ENCODE measurements at regions of chr2 and their contacts with region 1.

Region 1: GRCh38 chr2:230614913-230615332 is 97.7 kb upstream of the CAB39 start:
- DNase-seq: peak in 2 of 9 experiments; percentile 33 to 35
- ATAC-seq: no peak
- H3K4me3 ChIP-seq: no peak overlapping the region
- H3K4me3 Mint-ChIP-seq: no peak overlapping the region
- H3K27ac ChIP-seq: no peak overlapping the region
- H3K27ac Mint-ChIP-seq: no peak overlapping the region
- H3K4me1 ChIP-seq: peaks cover 15% of the 10 kb centered on the region
- H3K4me1 Mint-ChIP-seq: peaks cover 22% of the 10 kb centered on the region
- H3K27me3 ChIP-seq: no peaks in the 10 kb centered on the region
- H3K27me3 Mint-ChIP-seq: no peaks in the 10 kb centered on the region
- CTCF ChIP-seq: no peak

Region 2: DNA sequence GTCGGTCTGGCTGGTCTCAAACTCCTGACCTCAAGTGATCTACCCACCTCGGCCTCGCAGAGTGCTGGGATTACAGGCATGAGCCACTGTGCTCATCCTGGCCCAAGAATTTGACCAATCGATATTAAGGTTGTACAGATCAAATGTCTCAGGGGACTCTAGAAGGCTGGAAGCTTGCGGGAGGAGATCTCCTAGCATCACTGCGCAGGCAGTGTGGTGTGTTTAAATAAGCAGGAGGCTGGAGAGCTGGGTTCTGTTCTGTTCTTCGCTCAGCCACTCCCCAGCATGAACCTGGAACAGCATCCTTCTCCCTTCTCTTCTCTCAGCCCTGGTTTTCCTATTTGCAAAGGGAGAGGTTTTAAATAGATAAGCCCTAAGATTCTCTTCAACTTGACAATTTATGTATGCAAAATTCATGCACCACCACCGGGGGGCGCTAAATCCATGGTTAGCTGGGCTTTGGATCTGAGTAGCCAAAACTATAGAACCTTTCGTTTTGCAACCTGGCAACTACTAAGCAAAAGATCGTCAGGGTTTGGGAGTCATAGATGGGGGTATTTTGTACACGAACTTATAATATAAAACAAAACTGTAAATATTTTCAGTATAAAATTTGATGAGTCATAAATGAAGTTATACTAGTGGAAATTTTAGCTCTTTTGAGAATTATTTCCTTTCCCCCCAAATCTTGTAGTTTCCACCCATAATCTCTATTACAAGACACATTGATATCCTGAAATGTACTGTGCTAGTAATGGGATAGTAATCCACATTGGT is 606.8 kb before region 1 on chr2:
- CTCF ChIA-PET with region 1: interaction called, 8 read pairs
- POLR2A ChIA-PET with region 1: no interaction called
- intact Hi-C with region 1: loop called in 1 of 2 experiments (anchors 1 kb)
- DNase-seq: peak; percentile 56 to 87 (median 73)
- ATAC-seq: peak; percentile 48
- H3K4me3 ChIP-seq: no peak overlapping the region
- H3K4me3 Mint-ChIP-seq: no peak overlapping the region
- H3K27ac ChIP-seq: no peak overlapping the region
- H3K27ac Mint-ChIP-seq: no peak overlapping the region
- H3K4me1 ChIP-seq: no peaks in the 10 kb centered on the region
- H3K4me1 Mint-ChIP-seq: peaks cover 3% of the 10 kb centered on the region
- H3K27me3 ChIP-seq: no peaks in the 10 kb centered on the region
- H3K27me3 Mint-ChIP-seq: no peaks in the 10 kb centered on the region
- CTCF ChIP-seq: peak; percentile 83

Region 3: DNA sequence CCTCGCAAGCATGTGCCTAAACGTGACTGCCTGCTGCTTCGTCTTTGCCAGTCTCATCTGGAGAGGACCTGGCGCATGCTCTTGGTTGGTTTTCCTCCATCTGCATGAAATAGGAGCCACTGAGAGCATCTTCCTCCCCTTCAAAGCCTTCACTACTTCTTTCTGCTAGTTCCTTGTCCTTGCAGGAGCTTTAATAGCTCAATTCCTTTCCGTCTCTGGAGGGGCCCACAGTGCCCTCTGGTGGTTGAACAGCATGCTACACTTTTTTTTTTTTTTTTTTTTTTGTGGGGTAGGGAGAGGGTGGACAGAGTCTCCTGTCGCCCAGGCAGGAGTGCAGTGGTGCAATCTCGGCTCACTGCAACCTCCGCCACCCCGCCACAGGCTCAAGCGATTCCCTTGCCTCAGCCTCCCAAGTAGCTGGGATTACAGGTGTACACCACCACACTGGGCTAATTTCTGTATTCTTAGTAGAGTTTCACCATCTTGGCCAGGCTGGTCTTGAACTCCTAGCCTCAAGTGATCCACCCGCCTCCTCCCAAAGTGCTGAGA is 454.7 kb before region 1 on chr2:
- CTCF ChIA-PET with region 1: interaction called, 3 read pairs
- POLR2A ChIA-PET with region 1: no interaction called
- intact Hi-C with region 1: loop called (anchors 1 to 2 kb)
- DNase-seq: peak in 8 of 9 experiments; percentile 27 to 68 (median 55)
- ATAC-seq: peak; percentile 61
- H3K4me3 ChIP-seq: no peak overlapping the region
- H3K4me3 Mint-ChIP-seq: no peak overlapping the region
- H3K27ac ChIP-seq: no peak overlapping the region
- H3K27ac Mint-ChIP-seq: no peak overlapping the region
- H3K4me1 ChIP-seq: no peaks in the 10 kb centered on the region
- H3K4me1 Mint-ChIP-seq: peaks cover 2% of the 10 kb centered on the region
- H3K27me3 ChIP-seq: no peaks in the 10 kb centered on the region
- H3K27me3 Mint-ChIP-seq: no peaks in the 10 kb centered on the region
- CTCF ChIP-seq: peak; percentile 88

Region 4: GRCh38 chr2:230219419-230220331 is 395.2 kb before region 1 on chr2 and contains the start of gene SP110:
- CTCF ChIA-PET with region 1: interaction called, 4 read pairs
- POLR2A ChIA-PET with region 1: no interaction called
- intact Hi-C with region 1: loop called (anchors 1 to 2 kb)
- DNase-seq: peak; percentile 52 to 89 (median 78)
- ATAC-seq: peak; percentile 93
- H3K4me3 ChIP-seq: peak within 1 kb of the TSS; percentile 90 to 96
- H3K4me3 Mint-ChIP-seq: peak within 1 kb of the TSS; percentile 98
- H3K27ac ChIP-seq: peak within 1 kb of the TSS; percentile 82 to 88
- H3K27ac Mint-ChIP-seq: peak within 1 kb of the TSS; percentile 99
- H3K4me1 ChIP-seq: peaks cover 36% of the 10 kb centered on the region
- H3K4me1 Mint-ChIP-seq: peaks cover 60% of the 10 kb centered on the region
- H3K27me3 ChIP-seq: no peaks in the 10 kb centered on the region
- H3K27me3 Mint-ChIP-seq: no peaks in the 10 kb centered on the region
- CTCF ChIP-seq: no peak
- total RNA-seq, gene SP110: 50.6 to 58.1 TPM

Region 5: DNA sequence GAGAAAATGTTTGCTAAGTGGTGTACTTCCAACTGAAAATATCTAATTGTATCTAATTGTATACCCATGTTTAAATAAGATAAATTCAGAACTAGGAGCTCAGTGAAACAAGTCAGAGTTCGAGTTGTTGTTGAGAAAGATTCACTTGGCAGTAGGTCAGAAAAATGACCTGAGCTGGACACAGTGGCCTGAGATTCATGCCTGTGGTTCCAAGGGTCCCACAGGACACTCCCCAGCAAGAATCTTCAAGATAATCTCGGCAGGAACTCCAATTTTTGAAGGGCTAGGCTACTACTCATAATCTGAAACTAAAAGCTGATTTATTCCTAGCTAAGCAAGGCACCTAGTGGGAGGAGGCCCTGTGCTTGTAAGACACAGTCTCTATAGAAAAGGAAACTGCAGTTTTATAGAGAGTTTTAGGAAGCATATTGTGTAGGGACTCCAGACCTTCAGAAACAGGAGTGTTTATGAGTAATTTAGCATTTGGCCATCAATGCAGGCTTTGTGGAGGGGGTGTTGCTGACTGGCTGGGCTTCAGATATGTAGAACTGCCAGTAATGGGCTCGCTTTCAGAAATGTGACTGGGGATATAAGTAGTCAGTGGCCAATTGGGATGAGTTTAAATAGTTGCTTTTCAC is 346.2 kb before region 1 on chr2:
- CTCF ChIA-PET with region 1: no interaction called
- POLR2A ChIA-PET with region 1: no interaction called
- intact Hi-C with region 1: no loop called
- DNase-seq: no peak
- ATAC-seq: no peak
- H3K4me3 ChIP-seq: no peak overlapping the region
- H3K4me3 Mint-ChIP-seq: no peak overlapping the region
- H3K27ac ChIP-seq: no peak overlapping the region
- H3K27ac Mint-ChIP-seq: no peak overlapping the region
- H3K4me1 ChIP-seq: no peaks in the 10 kb centered on the region
- H3K4me1 Mint-ChIP-seq: peaks cover 14% of the 10 kb centered on the region
- H3K27me3 ChIP-seq: no peaks in the 10 kb centered on the region
- H3K27me3 Mint-ChIP-seq: no peaks in the 10 kb centered on the region
- CTCF ChIP-seq: no peak

Region 6: GRCh38 chr2:230472621-230473018 is 142.3 kb before region 1 on chr2:
- CTCF ChIA-PET with region 1: no interaction called
- POLR2A ChIA-PET with region 1: no interaction called
- intact Hi-C with region 1: loop called (anchors 5 kb)
- DNase-seq: peak in 3 of 9 experiments; percentile 8 to 24 (median 9)
- ATAC-seq: peak; percentile 48
- H3K4me3 ChIP-seq: no peak overlapping the region
- H3K4me3 Mint-ChIP-seq: no peak overlapping the region
- H3K27ac ChIP-seq: peak overlapping the region in 1 of 2 experiments; percentile 55
- H3K27ac Mint-ChIP-seq: peak overlapping the region; percentile 91
- H3K4me1 ChIP-seq: peaks cover 18% of the 10 kb centered on the region
- H3K4me1 Mint-ChIP-seq: peaks cover 41% of the 10 kb centered on the region
- H3K27me3 ChIP-seq: no peaks in the 10 kb centered on the region
- H3K27me3 Mint-ChIP-seq: no peaks in the 10 kb centered on the region
- CTCF ChIP-seq: no peak

Region 7: GRCh38 chr2:230684270-230685168 is 69.6 kb after region 1 on chr2:
- CTCF ChIA-PET with region 1: no interaction called
- POLR2A ChIA-PET with region 1: no interaction called
- intact Hi-C with region 1: no loop called
- DNase-seq: no peak
- ATAC-seq: no peak
- H3K4me3 ChIP-seq: no peak overlapping the region
- H3K4me3 Mint-ChIP-seq: no peak overlapping the region
- H3K27ac ChIP-seq: no peak overlapping the region
- H3K27ac Mint-ChIP-seq: no peak overlapping the region
- H3K4me1 ChIP-seq: no peaks in the 10 kb centered on the region
- H3K4me1 Mint-ChIP-seq: peaks cover 3% of the 10 kb centered on the region
- H3K27me3 ChIP-seq: no peaks in the 10 kb centered on the region
- H3K27me3 Mint-ChIP-seq: no peaks in the 10 kb centered on the region
- CTCF ChIP-seq: no peak

Region 8: DNA sequence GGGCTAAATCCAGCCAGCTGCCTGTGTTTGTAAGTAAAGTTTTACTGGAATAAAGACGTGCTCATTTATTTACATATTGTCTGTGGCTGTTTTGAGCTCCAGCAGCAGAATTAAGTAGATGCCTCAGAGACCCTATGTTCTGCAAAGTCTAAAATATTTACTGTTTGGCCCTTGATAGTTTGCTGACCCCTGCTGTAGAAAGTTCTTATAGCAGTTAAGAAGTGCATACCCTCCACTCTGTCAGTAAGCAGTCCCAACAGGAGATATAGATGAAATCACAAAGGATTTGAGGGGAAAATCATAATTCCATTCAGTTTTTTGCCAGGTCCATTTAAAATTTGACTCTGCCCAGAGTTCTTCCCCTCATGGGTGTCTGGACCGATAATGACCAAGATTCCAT is 199.7 kb after region 1 on chr2:
- CTCF ChIA-PET with region 1: no interaction called
- POLR2A ChIA-PET with region 1: no interaction called
- intact Hi-C with region 1: no loop called
- DNase-seq: peak in 1 of 9 experiments; percentile 33
- ATAC-seq: no peak
- H3K4me3 ChIP-seq: no peak overlapping the region
- H3K4me3 Mint-ChIP-seq: no peak overlapping the region
- H3K27ac ChIP-seq: no peak overlapping the region
- H3K27ac Mint-ChIP-seq: peak overlapping the region; percentile 80
- H3K4me1 ChIP-seq: no peaks in the 10 kb centered on the region
- H3K4me1 Mint-ChIP-seq: peaks cover 14% of the 10 kb centered on the region
- H3K27me3 ChIP-seq: no peaks in the 10 kb centered on the region
- H3K27me3 Mint-ChIP-seq: no peaks in the 10 kb centered on the region
- CTCF ChIP-seq: no peak